Posterior vena cava (tissue), 2 donors: ENCODE measurements at regions of chr1 and their contacts with region 1.

Region 1: GRCh38 chr1:55277377-55278130 is 62.4 kb upstream of the USP24 start:
- DNase-seq: peak; percentile 93

Region 2: DNA sequence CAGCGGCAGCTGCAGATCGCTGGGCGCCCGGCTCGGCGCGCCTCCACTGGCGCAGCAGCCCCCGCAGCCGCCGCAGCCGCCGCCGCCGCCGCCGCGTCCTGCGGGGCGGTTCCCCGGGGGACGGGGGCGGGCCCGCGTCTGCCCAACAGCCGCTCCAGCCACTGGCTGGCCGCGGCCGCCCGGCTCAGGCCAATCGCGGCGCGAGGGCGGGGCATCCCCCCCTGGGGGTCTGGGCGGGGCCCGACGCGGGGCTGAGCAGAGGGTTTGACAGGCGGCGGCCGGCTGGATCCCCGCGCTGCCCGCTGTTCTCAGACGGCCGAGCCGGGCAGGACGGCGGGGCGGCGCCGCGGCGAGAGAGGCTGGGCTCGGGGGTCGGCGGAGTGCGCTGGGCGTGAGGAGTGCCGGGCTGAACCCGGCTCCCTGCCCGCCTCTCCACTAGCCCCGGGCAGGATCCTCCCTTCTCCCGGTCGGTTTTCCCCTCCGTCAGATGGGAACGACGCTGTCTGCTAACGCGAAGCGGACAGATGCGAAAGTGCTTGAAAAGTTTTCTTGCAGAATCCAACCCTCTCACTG is 1538.4 kb before region 1 on chr1 and contains the start of gene GLIS1:
- intact Hi-C with region 1: no loop called
- DNase-seq: peak; percentile 92
- total RNA-seq, gene GLIS1: 0.74 to 1.7 TPM

Region 3: DNA sequence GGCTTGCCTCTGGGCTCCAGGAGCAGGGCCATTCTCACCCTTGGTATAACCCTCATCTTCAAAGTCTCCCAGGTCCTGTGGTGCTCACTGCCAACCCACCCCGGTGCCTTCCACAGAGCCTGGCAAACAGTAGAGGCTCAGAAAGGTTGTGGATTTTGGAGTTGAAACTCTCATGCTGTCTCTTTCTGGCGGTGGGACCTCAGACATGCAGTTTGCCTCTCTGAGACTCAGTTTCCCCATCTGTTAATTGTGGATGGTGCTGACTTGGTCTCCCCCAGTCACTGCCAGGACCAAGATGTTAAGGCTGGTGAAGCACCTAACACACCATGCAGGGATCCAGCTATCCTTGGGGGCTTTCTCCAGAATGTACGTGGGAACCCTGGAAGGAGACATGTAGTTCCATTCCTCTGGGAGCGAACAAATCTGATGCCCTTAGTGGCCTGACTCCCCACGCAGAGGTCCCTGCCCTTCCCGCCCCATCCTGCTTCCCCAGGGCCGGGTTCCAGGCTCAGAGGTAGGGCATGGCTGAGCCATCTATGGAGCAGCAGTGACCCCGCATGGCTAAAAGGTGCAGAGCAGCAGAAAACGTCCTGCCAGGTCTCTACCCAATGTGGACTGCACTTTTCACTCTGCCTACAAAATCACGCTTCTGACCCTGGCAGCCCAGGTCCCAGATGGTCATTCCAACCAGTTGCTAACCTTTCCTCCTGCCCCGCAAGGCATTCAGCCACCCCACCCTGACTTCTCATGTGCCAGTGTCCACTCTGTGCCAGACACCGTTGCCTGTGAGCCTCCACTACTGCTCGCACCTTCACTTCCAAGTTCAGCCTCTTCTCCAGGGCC is 467.2 kb before region 1 on chr1:
- intact Hi-C with region 1: loop called in 1 of 2 experiments (anchors 5 kb)
- DNase-seq: peak; percentile 88

Region 4: GRCh38 chr1:55140546-55140983 is 137.0 kb before region 1 on chr1:
- intact Hi-C with region 1: loop called (anchors 2 to 5 kb)
- DNase-seq: no peak

Region 5: DNA sequence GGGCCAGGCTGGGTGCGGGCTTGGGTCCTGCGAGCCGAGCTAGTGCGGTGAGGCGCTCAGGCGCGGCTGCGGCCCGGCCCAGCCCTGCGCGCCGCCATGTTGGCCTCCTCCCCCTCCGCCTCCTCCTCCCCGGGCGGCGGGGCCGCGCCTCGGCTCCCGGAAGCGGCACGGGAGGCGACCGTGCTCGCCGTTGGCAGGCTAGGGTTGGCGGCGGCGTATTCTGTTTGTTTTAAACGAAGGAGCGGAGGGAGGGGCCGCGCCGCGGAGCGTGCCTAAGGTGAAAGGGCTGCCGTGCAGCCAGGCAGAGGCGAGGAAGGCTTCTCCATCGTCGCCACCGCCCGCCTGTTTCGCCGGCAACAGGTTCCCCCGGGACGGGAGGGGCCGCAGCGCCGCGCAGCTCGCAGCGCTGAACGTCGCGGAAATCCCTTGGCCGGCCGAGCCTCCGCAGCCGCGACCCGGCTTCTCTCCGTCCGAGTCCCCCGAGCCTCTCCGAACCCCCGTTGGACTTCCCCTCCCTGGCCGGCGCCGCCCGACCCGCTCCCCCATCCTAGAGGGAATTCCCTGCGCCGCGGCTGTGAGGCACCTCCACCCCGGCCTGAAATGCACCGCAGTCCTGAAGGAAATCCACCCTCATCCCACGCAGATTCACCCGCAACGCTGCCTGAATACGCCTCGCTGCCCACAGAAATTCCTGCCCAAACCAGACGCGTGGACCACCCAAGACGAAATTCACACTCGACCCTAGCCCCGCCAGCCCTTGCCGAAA is 62.1 kb before region 1 on chr1 and contains the start of gene USP24:
- intact Hi-C with region 1: loop called in 1 of 2 experiments (anchors 10 kb)
- DNase-seq: peak; percentile 93
- total RNA-seq, gene USP24: 31.5 to 35.1 TPM